Naive thymus-derived CD4-positive, alpha-beta T cell (primary cell): ENCODE measurements at regions of chr1 and their contacts with region 1.

Region 1: DNA sequence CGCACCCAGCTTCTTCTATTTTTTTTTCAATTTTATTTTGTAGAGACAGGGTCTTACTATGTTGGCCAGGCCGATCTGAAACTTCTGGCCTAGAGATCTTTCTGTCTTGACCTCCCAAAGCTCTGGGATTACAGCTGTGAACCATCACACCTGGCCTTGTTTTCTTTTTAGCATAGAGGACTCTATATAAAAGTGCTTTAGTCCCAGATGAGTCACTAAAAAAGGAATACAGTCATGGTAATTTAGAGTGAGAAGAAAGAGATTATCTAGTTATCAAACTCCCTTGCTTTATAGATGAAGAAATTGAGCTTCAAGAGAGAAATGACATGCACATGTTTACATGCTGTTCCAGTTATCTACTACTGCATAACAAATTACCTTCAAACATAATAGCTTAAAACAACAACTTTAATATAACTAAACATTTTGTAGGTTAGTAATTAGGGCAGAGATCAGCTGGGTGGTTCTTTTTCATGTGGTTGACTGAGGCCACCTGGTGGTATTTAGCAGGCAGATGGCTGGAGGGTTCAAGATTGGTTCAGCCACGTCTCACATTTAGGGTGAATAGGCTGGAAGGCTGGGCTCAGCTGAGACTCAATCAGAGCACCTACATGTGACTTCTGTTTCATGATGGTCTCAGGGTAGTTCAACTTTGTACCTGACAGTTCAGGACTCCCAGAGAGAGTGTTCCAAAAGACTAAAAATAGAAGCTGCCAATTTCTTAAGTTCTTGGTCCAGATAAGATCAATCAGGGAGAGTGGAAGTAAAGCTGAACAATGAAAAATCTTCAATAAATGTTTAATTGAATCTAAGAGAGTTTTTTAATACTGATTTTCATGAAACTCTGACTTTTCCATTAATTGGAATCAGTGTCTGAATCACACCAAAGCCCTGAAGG is 16.9 kb upstream of the MTF2 start:
- DNase-seq: peak in 7 of 9 donors; percentile 14 to 54 (median 49)
- ATAC-seq: peak; percentile 80
- H3K4me3 ChIP-seq: no peak overlapping the region
- H3K4me3 Mint-ChIP-seq: no peak overlapping the region
- H3K27ac ChIP-seq: no peak overlapping the region
- H3K27ac Mint-ChIP-seq: peak overlapping the region in 1 of 9 donors; percentile 23
- H3K4me1 ChIP-seq: no peaks in the 10 kb centered on the region
- H3K4me1 Mint-ChIP-seq: peaks cover 0 to 6% (median 3%) of the 10 kb centered on the region in 7 donors
- H3K27me3 ChIP-seq: peaks cover 0 to 1% of the 10 kb centered on the region in 2 donors
- H3K27me3 Mint-ChIP-seq: peaks cover 5 to 53% (median 16%) of the 10 kb centered on the region in 5 donors

Region 2: DNA sequence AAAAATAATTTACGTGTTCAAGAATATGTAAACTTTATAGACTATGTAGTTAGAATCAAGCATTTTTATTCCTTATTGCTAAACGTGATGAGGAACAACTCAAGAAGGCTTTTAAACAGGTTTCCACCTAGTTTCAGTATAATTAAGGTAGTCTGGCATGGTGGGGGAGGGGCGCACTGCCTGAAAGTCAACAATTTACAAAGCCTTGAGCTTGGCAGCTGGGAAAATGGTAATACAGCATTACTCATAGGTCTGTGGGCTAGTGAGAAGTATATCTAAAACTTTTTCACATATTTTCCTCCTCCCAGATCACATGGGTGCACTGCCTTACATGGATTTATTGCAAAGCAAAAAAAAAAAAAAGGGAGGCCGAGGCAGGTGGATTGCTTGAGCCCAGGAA is 352.4 kb before region 1 on chr1:
- CTCF ChIA-PET with region 1: no interaction called
- POLR2A ChIA-PET with region 1: no interaction called
- intact Hi-C with region 1: no loop called
- DNase-seq: no peak
- ATAC-seq: no peak
- H3K4me3 ChIP-seq: no peak overlapping the region
- H3K4me3 Mint-ChIP-seq: no peak overlapping the region
- H3K27ac ChIP-seq: no peak overlapping the region
- H3K27ac Mint-ChIP-seq: no peak overlapping the region
- H3K4me1 ChIP-seq: no peaks in the 10 kb centered on the region
- H3K4me1 Mint-ChIP-seq: no peaks in the 10 kb centered on the region
- H3K27me3 ChIP-seq: no peaks in the 10 kb centered on the region
- H3K27me3 Mint-ChIP-seq: peaks cover 0 to 25% (median 0%) of the 10 kb centered on the region in 5 donors

Region 3: DNA sequence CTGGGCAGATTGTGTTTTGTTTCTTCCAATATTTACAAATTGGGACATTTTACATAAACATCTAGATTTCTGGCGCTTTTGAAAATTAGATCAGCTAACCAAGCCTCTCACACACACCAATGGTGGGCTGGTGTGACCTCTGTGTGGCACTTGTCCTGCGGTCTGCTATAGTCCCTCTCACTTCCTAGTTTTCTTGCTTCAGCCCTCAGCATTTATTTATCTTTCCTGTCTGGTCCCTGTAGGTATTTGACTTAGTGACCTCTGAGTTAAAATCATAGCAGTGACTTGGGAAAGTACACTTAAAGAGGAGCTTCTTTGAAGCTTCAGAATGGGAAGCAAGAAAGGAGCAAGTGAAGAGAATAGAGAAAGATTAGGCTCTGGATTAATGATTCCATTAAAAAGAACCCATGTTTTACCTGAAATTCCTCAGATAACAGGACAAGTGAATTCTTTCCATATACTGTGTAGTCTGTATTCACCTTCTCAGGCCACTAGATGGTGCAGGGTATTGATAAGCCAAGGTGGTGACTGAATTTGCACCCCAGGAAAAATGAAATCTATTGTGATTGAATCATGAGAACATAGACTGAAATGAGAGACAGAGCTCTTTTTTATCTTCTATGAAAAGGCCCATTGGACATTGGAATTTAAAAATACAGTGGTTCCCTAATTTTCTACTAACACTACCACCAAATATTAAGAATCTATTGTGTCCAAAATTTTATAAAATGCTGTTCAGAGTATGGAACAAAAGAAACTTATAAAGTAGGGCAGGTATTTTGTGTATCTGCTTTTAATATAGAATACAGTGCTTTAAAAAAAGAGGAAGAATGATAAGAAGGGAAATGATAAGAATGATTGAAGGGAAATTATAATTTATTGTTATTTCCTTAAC is 93.8 kb before region 1 on chr1:
- CTCF ChIA-PET with region 1: interaction called, 3 read pairs
- POLR2A ChIA-PET with region 1: no interaction called
- intact Hi-C with region 1: loop called in 1 of 2 experiments (anchors 1 kb)
- DNase-seq: peak in 7 of 9 donors; percentile 22 to 60 (median 41)
- ATAC-seq: peak; percentile 72
- H3K4me3 ChIP-seq: no peak overlapping the region
- H3K4me3 Mint-ChIP-seq: no peak overlapping the region
- H3K27ac ChIP-seq: no peak overlapping the region
- H3K27ac Mint-ChIP-seq: peak overlapping the region in 7 of 9 donors; percentile 6 to 69 (median 44)
- H3K4me1 ChIP-seq: peaks cover 29 to 45% of the 10 kb centered on the region in 2 donors
- H3K4me1 Mint-ChIP-seq: peaks cover 22 to 33% (median 31%) of the 10 kb centered on the region in 7 donors
- H3K27me3 ChIP-seq: no peaks in the 10 kb centered on the region
- H3K27me3 Mint-ChIP-seq: no peaks in the 10 kb centered on the region

Region 4: DNA sequence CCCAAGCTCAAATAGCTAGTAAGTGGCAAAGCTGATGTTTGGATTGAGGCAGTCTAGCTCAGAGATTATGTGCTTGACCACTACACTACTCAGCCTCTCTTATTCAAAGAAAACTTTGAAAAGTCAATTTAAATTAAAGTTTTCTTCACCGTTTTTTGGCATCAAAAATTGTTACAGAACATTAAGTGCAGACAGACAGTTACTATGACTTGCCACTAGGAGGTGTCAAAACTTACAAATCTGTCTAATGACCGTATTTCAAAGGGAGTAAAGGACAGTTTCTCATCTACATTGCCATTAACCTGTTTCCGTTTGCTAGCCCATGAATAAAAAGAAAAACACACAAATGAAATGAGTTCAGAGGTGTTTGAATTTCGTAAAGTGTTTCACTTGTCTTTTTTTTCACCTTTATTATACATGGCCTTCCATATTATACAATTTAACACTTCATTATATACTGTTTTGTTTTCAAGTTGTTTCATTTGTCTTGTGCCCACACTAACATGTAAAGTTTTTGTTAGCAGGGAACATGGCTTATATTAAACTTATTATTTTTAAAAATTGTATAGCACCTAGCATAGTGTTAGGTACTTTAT is 40.5 kb before region 1 on chr1:
- CTCF ChIA-PET with region 1: interaction called, 29 read pairs
- POLR2A ChIA-PET with region 1: interaction called, 5 read pairs
- intact Hi-C with region 1: loop called (anchors 1 kb)
- DNase-seq: peak in 7 of 9 donors; percentile 16 to 64 (median 55)
- ATAC-seq: peak; percentile 78
- H3K4me3 ChIP-seq: no peak overlapping the region
- H3K4me3 Mint-ChIP-seq: no peak overlapping the region
- H3K27ac ChIP-seq: no peak overlapping the region
- H3K27ac Mint-ChIP-seq: no peak overlapping the region
- H3K4me1 ChIP-seq: peaks cover 0 to 4% of the 10 kb centered on the region in 2 donors
- H3K4me1 Mint-ChIP-seq: peaks cover 0 to 7% (median 5%) of the 10 kb centered on the region in 7 donors
- H3K27me3 ChIP-seq: no peaks in the 10 kb centered on the region
- H3K27me3 Mint-ChIP-seq: peaks cover 0 to 48% (median 3%) of the 10 kb centered on the region in 5 donors

Region 5: DNA sequence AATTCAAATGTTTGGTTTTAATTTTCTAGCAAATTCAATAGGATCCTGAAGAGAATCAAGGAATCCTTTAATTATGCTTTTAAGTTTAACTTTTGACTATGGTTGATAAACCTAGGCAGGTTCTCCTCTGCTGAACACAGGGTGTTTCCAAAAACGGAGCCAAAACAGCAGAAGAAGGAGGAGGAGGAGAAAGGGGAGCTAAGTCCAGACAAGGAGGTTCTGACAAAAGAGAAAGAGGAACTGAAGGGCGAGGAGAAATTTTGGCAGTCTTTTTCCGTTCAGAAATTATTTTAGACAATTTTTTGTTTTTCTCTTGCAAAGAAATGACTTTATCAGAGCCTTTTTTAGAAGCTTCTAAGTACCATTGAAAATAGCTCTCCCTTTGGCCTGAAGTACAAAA is 352.6 kb after region 1 on chr1:
- CTCF ChIA-PET with region 1: no interaction called
- POLR2A ChIA-PET with region 1: no interaction called
- intact Hi-C with region 1: no loop called
- DNase-seq: no peak
- ATAC-seq: no peak
- H3K4me3 ChIP-seq: no peak overlapping the region
- H3K4me3 Mint-ChIP-seq: no peak overlapping the region
- H3K27ac ChIP-seq: no peak overlapping the region
- H3K27ac Mint-ChIP-seq: no peak overlapping the region
- H3K4me1 ChIP-seq: no peaks in the 10 kb centered on the region
- H3K4me1 Mint-ChIP-seq: peaks cover 0 to 5% (median 0%) of the 10 kb centered on the region in 7 donors
- H3K27me3 ChIP-seq: no peaks in the 10 kb centered on the region
- H3K27me3 Mint-ChIP-seq: peaks cover 0 to 24% (median 7%) of the 10 kb centered on the region in 5 donors

Region 6: DNA sequence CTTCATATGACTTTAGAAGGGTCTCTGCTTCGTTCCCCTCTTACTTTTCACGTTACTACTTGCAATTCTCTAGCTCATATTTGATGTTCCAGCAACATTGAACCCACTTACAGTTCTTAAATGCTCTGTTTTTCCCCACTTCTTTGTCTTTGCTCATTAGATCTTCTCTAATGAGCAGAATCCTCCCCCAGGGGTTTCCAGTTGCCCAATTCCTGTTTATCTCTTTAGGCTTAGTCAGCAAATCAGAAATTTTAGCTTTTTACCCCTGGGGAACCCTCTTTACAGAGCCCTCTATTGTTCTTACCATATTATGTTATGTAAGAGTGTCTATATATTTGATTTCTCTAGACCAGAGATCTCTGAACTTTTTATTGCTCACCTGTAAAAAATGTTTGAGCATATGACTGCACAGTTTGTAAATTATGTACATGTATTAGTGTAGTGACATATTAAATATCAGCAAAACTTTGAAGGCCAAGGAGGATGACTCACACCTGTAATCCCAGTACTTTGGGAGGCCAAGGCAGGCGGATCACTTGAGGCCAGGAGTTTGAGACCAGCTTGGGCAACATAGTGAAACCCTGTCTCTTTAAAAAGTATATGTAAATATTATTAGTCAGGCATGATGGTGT is 457.2 kb after region 1 on chr1:
- CTCF ChIA-PET with region 1: no interaction called
- POLR2A ChIA-PET with region 1: no interaction called
- intact Hi-C with region 1: no loop called
- DNase-seq: no peak
- ATAC-seq: no peak
- H3K4me3 ChIP-seq: no peak overlapping the region
- H3K4me3 Mint-ChIP-seq: no peak overlapping the region
- H3K27ac ChIP-seq: no peak overlapping the region
- H3K27ac Mint-ChIP-seq: no peak overlapping the region
- H3K4me1 ChIP-seq: no peaks in the 10 kb centered on the region
- H3K4me1 Mint-ChIP-seq: no peaks in the 10 kb centered on the region
- H3K27me3 ChIP-seq: no peaks in the 10 kb centered on the region
- H3K27me3 Mint-ChIP-seq: peaks cover 0 to 8% (median 4%) of the 10 kb centered on the region in 5 donors